ENCODE measurements at regions of chr3 and their contacts with region 1.

Region 1: DNA sequence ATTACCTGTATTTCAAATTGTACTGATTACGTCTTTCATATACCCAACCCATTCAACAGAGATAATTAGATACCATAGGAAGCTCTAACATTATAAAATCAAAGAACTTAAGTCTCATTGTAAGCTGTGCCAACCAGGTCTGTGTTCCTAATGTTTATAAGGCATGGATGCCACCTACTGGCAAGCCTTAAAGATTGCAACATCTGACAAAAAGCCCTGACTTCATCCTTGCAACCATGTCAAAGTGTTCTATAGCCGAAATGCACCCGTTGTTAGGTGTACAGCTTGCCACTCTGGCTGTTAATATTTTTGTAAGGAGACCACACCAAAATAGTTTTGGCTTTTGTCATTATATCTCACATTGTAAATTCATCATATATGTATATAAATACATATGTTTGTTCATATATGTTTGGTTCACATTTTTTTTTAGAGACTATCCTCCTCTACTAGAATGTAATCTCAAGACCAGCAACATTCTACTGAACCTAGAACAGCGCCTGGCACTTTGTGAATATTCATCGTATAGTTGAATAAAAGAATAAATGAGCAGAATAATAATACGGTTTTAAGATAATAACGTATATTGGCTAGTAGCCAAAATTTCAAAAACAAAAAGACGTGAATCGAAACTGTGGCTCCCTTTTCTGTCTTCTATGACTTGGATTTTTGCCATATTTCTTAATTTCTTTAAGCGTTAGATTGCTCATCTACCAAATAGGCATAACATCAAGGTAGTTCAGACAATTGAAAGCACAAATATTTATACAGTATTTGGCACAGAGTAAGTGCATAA is 258.1 kb downstream of the TBL1XR1 start:
- DNase-seq: peak; percentile 46
- H3K4me3 Mint-ChIP-seq: no peak overlapping the region
- H3K27ac Mint-ChIP-seq: no peak overlapping the region
- H3K4me1 Mint-ChIP-seq: no peaks in the 10 kb centered on the region
- H3K27me3 Mint-ChIP-seq: no peaks in the 10 kb centered on the region

Region 2: GRCh38 chr3:176872771-176873209 is 66.4 kb before region 1 on chr3:
- CTCF ChIA-PET with region 1: interaction called, 37 read pairs
- DNase-seq: peak; percentile 71
- H3K4me3 Mint-ChIP-seq: no peak overlapping the region
- H3K27ac Mint-ChIP-seq: no peak overlapping the region
- H3K4me1 Mint-ChIP-seq: peaks cover 2% of the 10 kb centered on the region
- H3K27me3 Mint-ChIP-seq: no peaks in the 10 kb centered on the region

Region 3: GRCh38 chr3:176959867-176960266 is 20.6 kb after region 1 on chr3:
- CTCF ChIA-PET with region 1: no interaction called
- DNase-seq: no peak
- H3K4me3 Mint-ChIP-seq: no peak overlapping the region
- H3K27ac Mint-ChIP-seq: no peak overlapping the region
- H3K4me1 Mint-ChIP-seq: no peaks in the 10 kb centered on the region
- H3K27me3 Mint-ChIP-seq: no peaks in the 10 kb centered on the region